A673 (cell line): ENCODE measurements at regions of chr14 and their contacts with region 1.

Region 1: GRCh38 chr14:35420036-35420811 is 15.7 kb upstream of the NFKBIA start:
- DNase-seq: no peak
- H3K4me3 ChIP-seq: no peak overlapping the region
- H3K27ac ChIP-seq: no peak overlapping the region
- H3K4me1 ChIP-seq: no peaks in the 10 kb centered on the region
- H3K27me3 ChIP-seq: no peaks in the 10 kb centered on the region
- CTCF ChIP-seq: no peak

Region 2: GRCh38 chr14:34331728-34332623 is 1088.2 kb before region 1 on chr14:
- CTCF ChIA-PET with region 1: no interaction called
- POLR2A ChIA-PET with region 1: no interaction called
- intact Hi-C with region 1: loop called (anchors 5 kb)
- DNase-seq: peak; percentile 63
- H3K4me3 ChIP-seq: no peak overlapping the region
- H3K27ac ChIP-seq: no peak overlapping the region
- H3K4me1 ChIP-seq: no peaks in the 10 kb centered on the region
- H3K27me3 ChIP-seq: no peaks in the 10 kb centered on the region
- CTCF ChIP-seq: peak; percentile 90

Region 3: GRCh38 chr14:34614638-34615037 is 805.6 kb before region 1 on chr14:
- CTCF ChIA-PET with region 1: no interaction called
- POLR2A ChIA-PET with region 1: no interaction called
- intact Hi-C with region 1: no loop called
- DNase-seq: no peak
- H3K4me3 ChIP-seq: no peak overlapping the region
- H3K27ac ChIP-seq: no peak overlapping the region
- H3K4me1 ChIP-seq: no peaks in the 10 kb centered on the region
- H3K27me3 ChIP-seq: no peaks in the 10 kb centered on the region
- CTCF ChIP-seq: no peak

Region 4: GRCh38 chr14:34671716-34672115 is 748.5 kb before region 1 on chr14:
- CTCF ChIA-PET with region 1: no interaction called
- POLR2A ChIA-PET with region 1: no interaction called
- intact Hi-C with region 1: loop called (anchors 5 kb)
- DNase-seq: no peak
- H3K4me3 ChIP-seq: no peak overlapping the region
- H3K27ac ChIP-seq: no peak overlapping the region
- H3K4me1 ChIP-seq: no peaks in the 10 kb centered on the region
- H3K27me3 ChIP-seq: no peaks in the 10 kb centered on the region
- CTCF ChIP-seq: no peak

Region 5: GRCh38 chr14:35159742-35160409 is 260.3 kb before region 1 on chr14:
- CTCF ChIA-PET with region 1: no interaction called
- POLR2A ChIA-PET with region 1: no interaction called
- intact Hi-C with region 1: no loop called
- DNase-seq: peak; percentile 70
- H3K4me3 ChIP-seq: no peak overlapping the region
- H3K27ac ChIP-seq: peak overlapping the region; percentile 57
- H3K4me1 ChIP-seq: peaks cover 61% of the 10 kb centered on the region
- H3K27me3 ChIP-seq: no peaks in the 10 kb centered on the region
- CTCF ChIP-seq: no peak

Region 6: DNA sequence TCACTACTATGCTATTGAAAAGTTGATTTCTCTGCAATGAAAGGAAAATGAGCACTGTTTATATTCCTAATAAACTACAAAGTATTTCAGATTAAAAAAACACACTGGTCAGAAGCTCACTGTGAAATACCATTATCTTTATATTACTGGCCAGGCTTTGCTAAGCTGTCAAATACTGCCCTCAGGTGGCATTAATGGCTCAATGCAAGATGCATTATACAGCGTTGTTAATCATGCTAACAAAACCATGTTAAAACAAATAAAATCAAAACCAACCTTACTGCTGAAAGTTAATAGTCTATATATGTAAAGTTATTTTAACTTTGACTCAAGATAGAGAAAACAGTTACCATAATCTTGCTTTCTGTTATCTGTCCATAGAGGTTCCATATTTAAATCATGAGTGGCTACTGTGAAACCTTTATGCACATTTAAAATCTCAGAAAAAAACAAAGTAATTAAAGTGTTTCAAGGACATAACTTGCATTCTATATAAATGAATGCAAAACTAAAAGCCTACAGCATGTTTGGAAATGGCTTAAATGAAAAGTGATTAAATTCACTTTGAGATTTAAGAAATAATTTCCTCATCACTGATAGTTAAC is 267.2 kb after region 1 on chr14:
- CTCF ChIA-PET with region 1: no interaction called
- POLR2A ChIA-PET with region 1: interaction called, 5 read pairs
- intact Hi-C with region 1: loop called (anchors 5 kb)
- DNase-seq: peak; percentile 70
- H3K4me3 ChIP-seq: no peak overlapping the region
- H3K27ac ChIP-seq: no peak overlapping the region
- H3K4me1 ChIP-seq: peaks cover under 1% of the 10 kb centered on the region
- H3K27me3 ChIP-seq: no peaks in the 10 kb centered on the region
- CTCF ChIP-seq: peak; percentile 92

Region 7: GRCh38 chr14:35814371-35815005 is 394.3 kb after region 1 on chr14:
- CTCF ChIA-PET with region 1: no interaction called
- POLR2A ChIA-PET with region 1: no interaction called
- intact Hi-C with region 1: loop called (anchors 10 kb)
- DNase-seq: peak; percentile 83
- H3K4me3 ChIP-seq: no peak overlapping the region
- H3K27ac ChIP-seq: no peak overlapping the region
- H3K4me1 ChIP-seq: no peaks in the 10 kb centered on the region
- H3K27me3 ChIP-seq: no peaks in the 10 kb centered on the region
- CTCF ChIP-seq: peak; percentile 80